AG04449 (cell line): ENCODE measurements at regions of chr1 and their contacts with region 1.

Region 1: GRCh38 chr1:168483539-168483938 is 60.3 kb downstream of the XCL2 start:
- DNase-seq: peak; percentile 60
- H3K4me3 ChIP-seq: no peak overlapping the region
- CTCF ChIP-seq: no peak

Region 2: GRCh38 chr1:168466092-168466713 is 17.3 kb before region 1 on chr1:
- CTCF ChIA-PET with region 1: interaction called, 17 read pairs
- POLR2A ChIA-PET with region 1: no interaction called
- DNase-seq: no peak
- H3K4me3 ChIP-seq: no peak overlapping the region
- CTCF ChIP-seq: no peak